Caco-2 (cell line): ENCODE measurements at regions of chr1 and their contacts with region 1.

Region 1: GRCh38 chr1:16254263-16254928 is 17.4 kb upstream of the CPLANE2 start:
- DNase-seq: no peak
- H3K4me3 ChIP-seq: no peak overlapping the region
- H3K4me3 Mint-ChIP-seq: no peak overlapping the region
- H3K27ac Mint-ChIP-seq: no peak overlapping the region
- H3K4me1 ChIP-seq: no peaks in the 10 kb centered on the region
- H3K4me1 Mint-ChIP-seq: no peaks in the 10 kb centered on the region
- H3K27me3 ChIP-seq: no peaks in the 10 kb centered on the region
- H3K27me3 Mint-ChIP-seq: no peaks in the 10 kb centered on the region
- CTCF ChIP-seq: no peak

Region 2: DNA sequence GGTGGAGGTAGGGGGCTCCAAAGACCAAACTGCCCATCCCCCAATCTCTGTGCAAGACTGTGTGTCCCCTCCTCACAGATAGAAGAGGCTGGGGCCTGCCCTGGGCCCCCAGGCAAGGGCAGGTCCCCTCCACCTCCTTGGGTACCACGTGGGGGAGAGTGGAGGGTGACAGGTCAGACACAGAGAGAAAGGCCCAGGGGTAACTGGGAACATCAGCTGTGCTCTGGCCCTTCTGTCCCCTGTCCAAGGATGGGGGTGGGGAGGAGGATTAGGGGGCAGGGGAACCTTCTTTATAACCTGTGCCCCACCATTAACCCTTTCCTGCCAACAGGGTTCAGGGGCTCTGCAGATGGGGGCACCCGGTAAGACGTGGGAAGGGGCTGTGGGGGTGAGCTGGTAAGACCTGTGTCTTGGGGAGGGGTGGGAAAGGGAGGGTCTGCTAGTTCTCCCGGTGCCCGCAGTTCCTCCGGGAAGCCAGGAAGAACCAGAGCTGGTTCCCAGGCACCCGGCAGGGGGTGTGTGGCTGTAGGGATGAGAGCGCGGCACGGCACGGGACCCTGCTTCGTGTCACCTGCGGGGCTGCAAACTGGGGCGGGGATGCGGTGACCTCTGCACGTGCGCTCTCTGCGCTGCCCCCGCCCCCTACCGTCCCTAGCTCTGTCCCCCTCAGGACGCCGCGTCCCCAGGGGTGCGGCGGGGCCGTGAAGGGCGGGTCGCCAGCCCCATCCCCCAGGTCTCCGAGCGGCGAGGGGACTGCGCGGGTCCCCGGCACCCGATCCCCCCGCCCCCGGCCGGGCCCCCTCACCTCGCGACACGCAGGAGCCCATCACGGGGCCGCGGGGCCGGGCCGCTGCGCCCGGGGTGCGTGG is 181.5 kb before region 1 on chr1:
- CTCF ChIA-PET with region 1: interaction called, 10 read pairs
- POLR2A ChIA-PET with region 1: no interaction called
- intact Hi-C with region 1: no loop called
- DNase-seq: peak in 1 of 2 experiments; percentile 21
- H3K4me3 ChIP-seq: peak overlapping the region; percentile 46
- H3K4me3 Mint-ChIP-seq: peak overlapping the region; percentile 67
- H3K27ac Mint-ChIP-seq: no peak overlapping the region
- H3K4me1 ChIP-seq: no peaks in the 10 kb centered on the region
- H3K4me1 Mint-ChIP-seq: no peaks in the 10 kb centered on the region
- H3K27me3 ChIP-seq: no peaks in the 10 kb centered on the region
- H3K27me3 Mint-ChIP-seq: no peaks in the 10 kb centered on the region
- CTCF ChIP-seq: no peak

Region 3: DNA sequence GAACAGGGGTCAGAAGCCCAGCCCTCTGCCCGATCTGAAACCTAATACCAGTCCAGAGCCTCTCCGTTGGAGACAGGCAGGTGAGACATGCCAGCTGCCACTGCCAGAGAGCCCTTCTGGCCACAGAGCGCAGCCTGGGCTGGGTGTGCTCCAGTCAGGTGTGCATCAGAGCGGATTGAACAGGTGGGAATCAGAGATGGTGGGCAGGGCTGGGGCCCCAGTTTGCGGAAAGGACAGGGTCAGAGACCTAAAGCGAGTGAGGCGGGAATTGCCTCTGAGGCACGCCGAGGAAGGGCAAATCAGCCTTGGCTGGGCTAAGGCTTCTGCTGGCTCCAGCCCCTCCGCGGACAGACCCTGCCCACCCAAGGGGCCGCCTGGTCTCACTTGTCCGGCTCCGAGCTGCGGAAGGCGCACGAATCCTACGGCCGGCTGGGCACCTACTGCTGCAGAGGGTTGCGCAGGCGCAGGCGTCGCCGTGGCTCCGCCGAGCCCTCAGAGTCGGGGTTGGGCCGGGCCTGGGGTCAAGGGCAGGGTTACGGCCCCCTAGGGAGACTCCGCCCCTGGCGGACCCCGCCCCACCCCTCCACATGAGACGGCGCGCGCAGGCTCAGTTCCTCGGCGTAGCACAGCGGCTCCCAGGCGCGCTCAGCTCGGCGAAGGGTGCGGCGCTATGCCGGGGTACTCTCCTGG is 27.8 kb before region 1 on chr1:
- CTCF ChIA-PET with region 1: no interaction called
- POLR2A ChIA-PET with region 1: no interaction called
- intact Hi-C with region 1: no loop called
- DNase-seq: no peak
- H3K4me3 ChIP-seq: no peak overlapping the region
- H3K4me3 Mint-ChIP-seq: no peak overlapping the region
- H3K27ac Mint-ChIP-seq: no peak overlapping the region
- H3K4me1 ChIP-seq: no peaks in the 10 kb centered on the region
- H3K4me1 Mint-ChIP-seq: no peaks in the 10 kb centered on the region
- H3K27me3 ChIP-seq: no peaks in the 10 kb centered on the region
- H3K27me3 Mint-ChIP-seq: peaks cover under 1% of the 10 kb centered on the region
- CTCF ChIP-seq: no peak

Region 4: GRCh38 chr1:16276302-16277030 is 22.1 kb after region 1 on chr1:
- CTCF ChIA-PET with region 1: no interaction called
- POLR2A ChIA-PET with region 1: no interaction called
- intact Hi-C with region 1: no loop called
- DNase-seq: no peak
- H3K4me3 ChIP-seq: no peak overlapping the region
- H3K4me3 Mint-ChIP-seq: no peak overlapping the region
- H3K27ac Mint-ChIP-seq: no peak overlapping the region
- H3K4me1 ChIP-seq: no peaks in the 10 kb centered on the region
- H3K4me1 Mint-ChIP-seq: no peaks in the 10 kb centered on the region
- H3K27me3 ChIP-seq: no peaks in the 10 kb centered on the region
- H3K27me3 Mint-ChIP-seq: no peaks in the 10 kb centered on the region
- CTCF ChIP-seq: no peak